ENCODE measurements at regions of chr17 and their contacts with region 1.

Region 1: GRCh38 chr17:7435221-7435675 is at the start of gene TMEM102:
- DNase-seq: peak; percentile 98
- H3K4me3 Mint-ChIP-seq: peak within 1 kb of the TSS; percentile 87
- H3K27ac Mint-ChIP-seq: peak within 1 kb of the TSS; percentile 97
- H3K4me1 Mint-ChIP-seq: peaks cover 38% of the 10 kb centered on the region
- H3K27me3 Mint-ChIP-seq: peaks cover 10% of the 10 kb centered on the region
- total RNA-seq, gene TMEM102: 16.7 to 18.1 TPM

Region 2: DNA sequence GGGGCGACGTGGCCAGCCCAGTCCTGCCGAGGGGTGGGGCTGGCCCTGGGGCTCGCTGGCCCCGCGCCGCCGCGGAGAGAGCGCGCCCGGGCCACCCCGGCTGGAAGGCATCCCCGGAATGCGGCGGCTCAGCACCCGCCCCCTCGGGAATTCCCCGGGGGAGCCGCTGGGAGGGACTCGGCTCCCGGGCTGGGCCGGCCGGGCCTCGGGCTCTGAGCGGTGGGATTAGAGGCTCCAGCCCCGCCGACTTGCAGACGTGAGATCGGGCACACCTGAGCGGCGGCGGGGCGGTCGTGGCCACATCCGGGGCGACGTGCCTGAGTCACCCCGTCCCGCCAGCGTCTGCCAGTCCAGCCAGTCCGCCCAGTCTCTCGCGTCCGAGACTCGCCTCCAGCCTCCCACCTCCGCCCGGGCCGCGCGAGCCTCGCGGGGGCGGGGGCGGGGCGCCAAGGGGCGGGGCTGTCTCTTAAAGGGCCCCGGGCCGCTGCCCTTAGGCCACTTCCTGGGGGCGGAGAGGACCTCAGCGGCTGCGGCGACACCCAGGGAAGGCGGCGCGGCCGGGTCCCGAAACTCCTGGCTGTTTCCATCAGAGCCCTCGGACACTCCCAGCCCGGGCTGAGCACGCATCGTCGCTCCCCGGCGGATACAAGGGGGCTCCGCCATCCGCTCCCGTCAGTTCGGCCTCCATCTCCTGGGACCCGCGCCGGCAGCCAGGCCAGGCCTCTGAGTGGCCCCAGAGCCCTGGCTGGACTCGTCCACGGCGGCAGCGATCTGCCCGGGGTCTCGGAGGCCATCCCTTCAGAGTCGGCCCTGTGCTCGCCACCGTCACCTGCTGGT is 83.4 kb before region 1 on chr17 and contains the start of gene KCTD11:
- CTCF ChIA-PET with region 1: interaction called, 45 read pairs
- POLR2A ChIA-PET with region 1: no interaction called
- DNase-seq: peak; percentile 76
- H3K4me3 Mint-ChIP-seq: peak within 1 kb of the TSS; percentile 64
- H3K27ac Mint-ChIP-seq: peak within 1 kb of the TSS; percentile 84
- H3K4me1 Mint-ChIP-seq: peaks cover 70% of the 10 kb centered on the region
- H3K27me3 Mint-ChIP-seq: no peaks in the 10 kb centered on the region
- total RNA-seq, gene KCTD11: 11.2 to 12.5 TPM

Region 3: DNA sequence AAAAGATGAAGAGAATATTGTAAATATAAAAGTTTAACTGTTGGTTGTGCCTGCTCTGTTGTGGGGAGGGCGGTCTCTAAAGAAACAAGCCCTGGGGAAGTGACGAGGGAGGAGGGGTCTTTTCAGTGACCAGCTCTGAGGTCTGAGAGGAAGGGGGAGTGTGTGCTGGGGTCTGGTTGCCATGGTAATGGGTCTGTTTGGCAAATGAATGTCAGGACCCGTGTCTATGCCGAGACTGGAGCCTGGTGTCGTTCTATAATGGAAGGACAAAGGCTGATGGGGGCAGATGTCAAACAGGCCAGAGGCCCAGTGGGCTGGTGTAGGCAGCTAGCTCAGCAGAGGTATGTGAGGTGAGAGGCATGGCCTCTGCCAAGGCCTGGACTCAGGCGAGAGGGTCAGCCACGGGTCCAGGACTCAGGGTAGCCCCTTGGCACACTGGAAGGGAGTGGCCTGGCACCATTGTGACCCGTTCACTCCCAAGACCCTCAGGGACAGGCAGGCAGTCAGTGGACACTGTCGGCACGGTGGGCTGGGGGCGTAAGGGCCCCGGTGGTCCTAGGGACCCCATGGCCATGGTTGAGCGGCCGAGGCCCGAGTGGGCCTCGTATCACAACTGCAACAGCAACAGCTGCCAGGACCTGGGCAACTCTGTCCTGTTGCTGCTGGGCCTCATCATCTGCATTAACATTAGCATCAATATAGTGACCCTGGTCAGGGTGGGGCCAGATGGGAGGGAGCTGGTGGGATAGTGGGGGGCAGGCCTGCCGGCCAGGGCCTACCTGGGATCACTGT is 15.2 kb before region 1 on chr17 and contains the start of gene SPEM1:
- CTCF ChIA-PET with region 1: interaction called, 12 read pairs
- POLR2A ChIA-PET with region 1: no interaction called
- DNase-seq: no peak
- H3K4me3 Mint-ChIP-seq: no peak within 1 kb of the TSS
- H3K27ac Mint-ChIP-seq: peak within 1 kb of the TSS; percentile 73
- H3K4me1 Mint-ChIP-seq: no peaks in the 10 kb centered on the region
- H3K27me3 Mint-ChIP-seq: no peaks in the 10 kb centered on the region
- total RNA-seq, gene SPEM1: not detected

Region 4: GRCh38 chr17:7465597-7466275 is 30.5 kb after region 1 on chr17:
- CTCF ChIA-PET with region 1: interaction called, 14 read pairs
- POLR2A ChIA-PET with region 1: no interaction called
- DNase-seq: no peak
- H3K4me3 Mint-ChIP-seq: no peak overlapping the region
- H3K27ac Mint-ChIP-seq: no peak overlapping the region
- H3K4me1 Mint-ChIP-seq: peaks cover 16% of the 10 kb centered on the region
- H3K27me3 Mint-ChIP-seq: no peaks in the 10 kb centered on the region

Measured in activated CD4-positive, alpha-beta T cell treated with anti-CD3 and anti-CD28 coated beads, Interleukin-2, amount 10 ng/mL, durations not matched to agents 7 days and 5 days (primary cell).